ENCODE measurements at regions of chr11 and their contacts with region 1.

Region 1: DNA sequence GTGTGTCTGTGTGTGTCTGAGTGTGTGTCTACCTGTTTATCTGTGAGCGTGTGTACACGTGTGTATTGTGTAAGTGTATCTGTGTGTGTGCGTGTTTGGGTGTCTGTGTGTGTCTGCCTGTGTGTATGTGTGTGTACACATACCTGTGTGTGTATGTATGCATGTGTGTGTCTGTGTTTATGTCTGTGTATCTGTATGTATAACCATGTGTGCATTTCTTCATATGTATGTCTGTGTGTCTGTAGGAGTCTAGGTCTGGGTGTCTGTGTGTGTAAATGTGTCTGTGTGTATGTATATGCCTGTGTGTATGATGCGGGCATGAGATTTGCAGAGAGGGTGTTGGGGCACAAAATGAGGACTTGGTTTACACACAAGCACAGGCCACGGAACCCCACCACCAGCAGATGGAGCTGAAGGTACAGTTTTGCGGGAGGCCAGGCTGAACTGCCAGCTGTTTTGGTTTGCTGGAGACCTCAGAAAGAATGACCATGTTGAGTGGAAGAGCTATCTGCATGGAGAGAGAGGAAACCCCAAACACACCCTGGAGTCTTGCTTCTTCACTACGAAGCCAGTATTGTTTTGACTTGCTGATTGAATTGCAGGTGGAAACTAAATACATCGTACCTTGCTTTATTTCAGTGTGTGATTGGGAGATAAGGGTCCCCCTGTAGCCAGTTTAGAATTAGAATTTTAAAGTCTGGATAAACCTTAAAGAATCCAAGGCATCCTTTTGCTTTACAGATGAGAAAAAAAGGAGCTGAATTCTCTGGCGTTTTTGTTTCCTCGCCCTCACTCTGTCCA is 497.2 kb downstream of the NTM start:
- DNase-seq: peak; percentile 76 to 89 (median 86)
- ATAC-seq: peak; percentile 76 to 87
- H3K4me3 ChIP-seq: no peak overlapping the region
- H3K27ac ChIP-seq: no peak overlapping the region
- H3K4me1 ChIP-seq: no peaks in the 10 kb centered on the region
- H3K27me3 ChIP-seq: no peaks in the 10 kb centered on the region

Region 2: DNA sequence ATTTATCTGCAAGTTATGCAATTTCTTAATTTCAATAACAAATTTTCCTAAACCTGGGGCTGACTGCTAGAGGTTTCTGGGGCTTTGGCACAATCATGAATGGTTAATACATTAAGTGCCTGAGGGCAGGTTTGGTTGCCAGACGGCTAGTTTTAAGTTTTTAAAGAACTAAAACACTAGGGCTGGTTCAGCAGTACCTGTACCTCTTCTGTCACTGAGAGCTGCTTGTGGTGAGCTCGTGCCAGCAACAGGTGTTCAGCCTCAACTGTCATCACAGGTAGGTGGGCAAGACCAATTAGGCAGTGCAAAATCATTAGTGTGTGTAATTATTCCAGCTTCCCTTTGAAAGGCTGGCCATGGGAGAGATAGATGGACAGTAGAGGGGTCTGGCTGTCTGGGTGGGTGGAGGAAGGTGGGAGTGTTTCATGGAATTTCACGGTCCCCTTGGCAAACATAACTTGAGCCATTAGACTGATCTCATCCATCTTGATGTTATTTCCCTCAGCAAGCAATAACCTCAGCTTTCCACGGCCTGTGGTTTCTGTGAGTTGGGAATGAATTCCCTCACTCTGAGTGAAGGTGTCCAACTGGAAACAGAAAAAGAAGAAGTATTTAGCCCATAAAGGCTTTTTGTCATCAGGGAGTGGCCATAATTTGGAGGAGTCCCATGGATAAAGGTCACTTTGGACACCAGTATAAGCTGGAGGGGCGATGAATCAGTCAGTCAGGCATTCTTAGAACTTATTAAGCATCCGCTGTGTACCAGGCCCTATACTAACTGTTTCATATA is 1066.1 kb before region 1 on chr11:
- intact Hi-C with region 1: no loop called
- DNase-seq: no peak
- ATAC-seq: no peak
- H3K4me3 ChIP-seq: no peak overlapping the region
- H3K27ac ChIP-seq: no peak overlapping the region
- H3K4me1 ChIP-seq: peaks cover 2% of the 10 kb centered on the region
- H3K27me3 ChIP-seq: no peaks in the 10 kb centered on the region

Region 3: DNA sequence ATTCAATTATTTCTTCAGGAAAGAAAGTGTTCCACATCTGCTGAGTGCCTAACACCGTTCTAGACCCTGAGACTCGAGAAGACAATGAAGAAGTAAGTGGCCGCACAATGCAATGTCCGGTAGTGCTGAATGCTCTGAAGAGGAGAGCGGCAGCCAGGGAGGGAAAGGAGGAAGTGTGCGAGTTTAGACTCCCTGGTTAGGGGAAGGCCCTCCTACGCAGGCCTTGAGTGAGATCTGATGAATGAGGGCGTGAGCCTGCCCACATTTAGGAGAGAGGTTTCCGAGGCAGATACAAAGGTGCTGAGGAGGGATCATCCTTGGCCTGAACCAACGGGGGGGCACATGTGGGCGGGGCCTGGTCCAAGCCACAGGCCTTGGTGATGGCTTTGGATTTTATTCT is 61.3 kb after region 1 on chr11:
- intact Hi-C with region 1: no loop called
- DNase-seq: peak in 2 of 3 donors; percentile 49 to 59
- ATAC-seq: peak; percentile 35 to 52
- H3K4me3 ChIP-seq: no peak overlapping the region
- H3K27ac ChIP-seq: peak overlapping the region; percentile 3
- H3K4me1 ChIP-seq: no peaks in the 10 kb centered on the region
- H3K27me3 ChIP-seq: no peaks in the 10 kb centered on the region

Region 4: DNA sequence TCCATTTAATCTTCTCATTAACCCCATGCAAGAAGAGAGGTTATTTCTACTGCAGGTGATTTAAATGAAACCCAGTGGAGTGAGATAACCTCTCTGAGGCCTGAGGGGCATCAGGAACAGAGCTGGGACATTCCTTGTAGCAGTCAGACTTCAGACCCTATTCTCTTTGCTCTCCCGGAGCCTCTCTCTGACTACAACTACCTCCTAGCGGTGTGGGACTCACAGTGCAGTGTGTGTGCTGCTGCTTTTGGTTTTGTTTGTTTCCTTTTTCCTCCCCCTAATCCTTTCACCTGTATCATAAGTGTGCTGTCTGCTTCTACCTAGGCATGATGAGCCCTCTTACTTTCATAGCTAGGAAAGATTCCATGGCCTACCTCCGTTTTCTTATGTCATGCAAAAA is 272.4 kb after region 1 on chr11:
- intact Hi-C with region 1: loop called in 1 of 4 experiments (anchors 10 kb)
- DNase-seq: no peak
- ATAC-seq: no peak
- H3K4me3 ChIP-seq: no peak overlapping the region
- H3K27ac ChIP-seq: no peak overlapping the region
- H3K4me1 ChIP-seq: no peaks in the 10 kb centered on the region
- H3K27me3 ChIP-seq: no peaks in the 10 kb centered on the region

Region 5: DNA sequence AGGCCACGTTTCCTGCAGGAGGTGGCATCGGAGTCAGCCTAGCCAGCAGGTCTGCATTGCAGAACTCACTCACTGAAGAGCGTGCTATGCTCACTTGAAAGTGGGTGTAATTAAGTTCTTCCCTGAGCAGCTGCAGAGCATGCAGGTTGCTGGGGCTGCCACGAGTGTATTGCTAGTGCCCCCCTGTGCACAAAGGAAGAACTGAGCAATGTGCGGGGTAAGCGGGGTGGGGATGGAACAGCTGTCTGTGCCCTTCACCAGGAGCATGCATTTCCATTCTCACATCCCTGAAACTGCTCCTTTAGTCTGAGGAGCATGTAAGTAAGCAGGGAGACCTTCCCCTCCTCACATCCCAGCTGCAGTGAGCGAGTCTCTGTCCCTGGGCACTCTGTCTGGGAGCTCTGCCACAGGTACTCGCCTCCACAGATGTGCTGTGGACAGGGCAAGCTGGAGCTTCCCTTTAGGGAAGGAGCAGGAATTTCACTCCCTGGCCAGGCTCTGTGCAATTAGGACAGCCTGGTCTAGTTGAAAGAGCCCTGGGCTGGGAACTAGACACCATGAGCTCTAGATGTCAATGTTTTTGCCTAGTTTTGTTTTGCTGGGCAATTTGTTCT is 534.5 kb after region 1 on chr11:
- intact Hi-C with region 1: loop called in 3 of 4 experiments (anchors 5 to 10 kb)
- DNase-seq: peak; percentile 18 to 70 (median 53)
- ATAC-seq: peak; percentile 81 to 83
- H3K4me3 ChIP-seq: no peak overlapping the region
- H3K27ac ChIP-seq: no peak overlapping the region
- H3K4me1 ChIP-seq: no peaks in the 10 kb centered on the region
- H3K27me3 ChIP-seq: no peaks in the 10 kb centered on the region